ENCODE measurements at regions of chr17 and their contacts with region 1.

Region 1: DNA sequence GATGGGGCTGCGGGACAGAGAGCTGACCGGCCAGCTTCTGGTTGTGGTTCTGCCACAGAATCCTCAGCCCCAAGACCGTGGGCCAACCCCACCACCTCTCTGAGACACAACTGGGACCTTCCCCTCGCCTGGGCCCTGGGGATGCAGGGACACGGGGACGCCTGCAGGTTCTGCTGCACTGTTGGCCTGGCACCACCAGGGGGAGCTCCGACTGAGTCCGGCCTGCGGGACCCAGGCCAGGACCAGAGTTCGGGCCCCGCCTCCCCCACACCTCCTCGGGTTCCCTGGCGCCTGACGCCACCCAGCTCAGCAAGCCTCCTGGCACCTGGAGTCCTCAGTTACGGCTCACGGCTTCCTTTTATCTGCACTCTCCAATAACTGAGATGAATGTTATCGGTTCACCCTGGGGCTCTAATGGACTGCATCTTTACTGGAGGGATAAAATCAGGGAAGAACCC is 27.3 kb downstream of the TBC1D16 start:
- DNase-seq: peak; percentile 77
- ATAC-seq: peak; percentile 94
- H3K4me3 Mint-ChIP-seq: no peak overlapping the region
- H3K27ac Mint-ChIP-seq: no peak overlapping the region
- H3K4me1 Mint-ChIP-seq: peaks cover 5% of the 10 kb centered on the region
- H3K27me3 Mint-ChIP-seq: no peaks in the 10 kb centered on the region
- CTCF ChIP-seq: peak; percentile 60

Region 2: GRCh38 chr17:80035943-80036714 is 27.7 kb after region 1 on chr17 and contains the start of gene CCDC40:
- CTCF ChIA-PET with region 1: interaction called, 7 read pairs
- POLR2A ChIA-PET with region 1: no interaction called
- intact Hi-C with region 1: loop called (anchors 1 kb)
- DNase-seq: peak; percentile 80
- ATAC-seq: peak; percentile 83
- H3K4me3 Mint-ChIP-seq: peak within 1 kb of the TSS; percentile 89
- H3K27ac Mint-ChIP-seq: peak within 1 kb of the TSS; percentile 86
- H3K4me1 Mint-ChIP-seq: peaks cover 15% of the 10 kb centered on the region
- H3K27me3 Mint-ChIP-seq: peaks cover 3% of the 10 kb centered on the region
- CTCF ChIP-seq: no peak
- total RNA-seq, gene CCDC40: 0.46 and 0.55 TPM in 2 replicates

Region 3: DNA sequence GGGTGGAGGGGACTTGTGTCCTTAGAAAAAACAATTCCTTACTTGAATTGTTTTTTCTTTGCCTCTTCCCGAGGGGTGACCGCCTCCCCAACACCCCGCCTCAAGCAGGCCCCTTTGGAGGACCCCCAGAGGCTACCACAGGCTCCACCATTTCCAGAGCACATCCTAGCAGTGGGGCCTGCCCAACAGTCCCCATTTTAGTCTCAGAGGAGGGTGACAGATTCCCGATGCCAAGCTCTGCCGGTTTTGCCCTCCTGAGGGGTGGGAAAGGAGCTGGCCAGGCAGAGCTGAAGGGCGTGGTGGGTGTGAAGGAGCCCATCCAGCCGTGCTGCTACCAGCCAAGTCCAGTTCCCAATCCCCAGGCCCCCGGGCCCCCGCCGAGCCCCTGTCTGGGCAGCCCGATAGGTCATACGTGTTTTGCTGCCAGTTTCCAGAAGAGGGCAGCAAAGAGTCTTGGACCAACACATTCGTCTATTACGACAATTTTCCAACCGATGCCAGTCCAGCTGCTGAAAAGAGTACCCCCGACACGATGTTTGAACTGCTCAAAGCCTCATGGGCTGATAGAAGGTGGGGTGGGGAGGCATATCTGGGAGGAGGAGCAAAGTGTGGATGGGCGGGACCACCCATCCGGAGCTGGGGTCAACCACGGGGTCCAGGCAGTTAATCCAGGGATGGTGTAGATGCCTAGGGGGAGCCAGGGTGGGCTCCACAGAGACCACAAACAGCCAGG is 74.2 kb after region 1 on chr17:
- CTCF ChIA-PET with region 1: interaction called, 6 read pairs
- POLR2A ChIA-PET with region 1: no interaction called
- intact Hi-C with region 1: loop called (anchors 1 kb)
- DNase-seq: peak; percentile 43
- ATAC-seq: peak; percentile 68
- H3K4me3 Mint-ChIP-seq: no peak overlapping the region
- H3K27ac Mint-ChIP-seq: no peak overlapping the region
- H3K4me1 Mint-ChIP-seq: peaks cover 2% of the 10 kb centered on the region
- H3K27me3 Mint-ChIP-seq: peaks cover 8% of the 10 kb centered on the region
- CTCF ChIP-seq: peak; percentile 79

Region 4: GRCh38 chr17:80254396-80255251 is 246.2 kb after region 1 on chr17:
- CTCF ChIA-PET with region 1: no interaction called
- POLR2A ChIA-PET with region 1: no interaction called
- intact Hi-C with region 1: loop called (anchors 10 kb)
- DNase-seq: no peak
- ATAC-seq: peak; percentile 74
- H3K4me3 Mint-ChIP-seq: peak overlapping the region; percentile 50
- H3K27ac Mint-ChIP-seq: peak overlapping the region; percentile 67
- H3K4me1 Mint-ChIP-seq: peaks cover 40% of the 10 kb centered on the region
- H3K27me3 Mint-ChIP-seq: no peaks in the 10 kb centered on the region
- CTCF ChIP-seq: no peak

Region 5: GRCh38 chr17:80512233-80512632 is 503.8 kb after region 1 on chr17:
- CTCF ChIA-PET with region 1: no interaction called
- POLR2A ChIA-PET with region 1: no interaction called
- intact Hi-C with region 1: no loop called
- DNase-seq: no peak
- ATAC-seq: no peak
- H3K4me3 Mint-ChIP-seq: no peak overlapping the region
- H3K27ac Mint-ChIP-seq: no peak overlapping the region
- H3K4me1 Mint-ChIP-seq: no peaks in the 10 kb centered on the region
- H3K27me3 Mint-ChIP-seq: peaks cover 6% of the 10 kb centered on the region
- CTCF ChIP-seq: no peak

Measured in activated B cell treated with CpG ODN at 0.5 μM for 24 hours (primary cell).